Colonic mucosa (tissue), 4 donors: ENCODE measurements at regions of chr2 and their contacts with region 1.

Region 1: GRCh38 chr2:177164584-177165052 is 48.0 kb upstream of the HNRNPA3 start:
- DNase-seq: peak; percentile 92
- H3K4me3 ChIP-seq: peak overlapping the region; percentile 30
- H3K27ac ChIP-seq: peak overlapping the region; percentile 85
- H3K4me1 ChIP-seq: peaks cover 3% of the 10 kb centered on the region
- H3K27me3 ChIP-seq: no peaks in the 10 kb centered on the region
- CTCF ChIP-seq: peak; percentile 99

Region 2: GRCh38 chr2:177118636-177119035 is 46.0 kb before region 1 on chr2:
- intact Hi-C with region 1: no loop called
- DNase-seq: no peak
- H3K4me3 ChIP-seq: no peak overlapping the region
- H3K27ac ChIP-seq: no peak overlapping the region
- H3K4me1 ChIP-seq: no peaks in the 10 kb centered on the region
- H3K27me3 ChIP-seq: no peaks in the 10 kb centered on the region
- CTCF ChIP-seq: no peak

Region 3: DNA sequence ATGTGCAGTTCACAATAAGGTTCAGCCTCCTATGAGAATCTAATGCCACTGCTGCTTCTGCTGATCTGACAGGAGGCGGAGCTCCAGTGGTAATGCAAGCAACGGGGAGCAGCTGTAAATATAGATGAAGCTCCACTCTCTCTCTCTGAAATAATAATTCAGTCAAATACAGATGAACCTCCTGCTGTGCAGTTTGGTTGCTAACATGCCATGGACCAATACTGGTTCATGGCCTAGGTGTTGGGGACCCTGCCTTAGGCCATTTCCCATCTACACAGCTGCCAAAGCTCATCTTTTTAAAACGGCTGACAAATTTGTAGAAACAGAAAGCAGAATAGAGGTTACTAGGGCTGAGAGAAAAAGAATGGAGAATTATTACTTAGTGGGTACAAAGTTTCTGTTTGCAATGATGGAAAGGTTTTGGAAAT is 37.3 kb after region 1 on chr2:
- intact Hi-C with region 1: loop called (anchors 5 kb)
- DNase-seq: no peak
- H3K4me3 ChIP-seq: no peak overlapping the region
- H3K27ac ChIP-seq: no peak overlapping the region
- H3K4me1 ChIP-seq: no peaks in the 10 kb centered on the region
- H3K27me3 ChIP-seq: no peaks in the 10 kb centered on the region
- CTCF ChIP-seq: no peak

Region 4: DNA sequence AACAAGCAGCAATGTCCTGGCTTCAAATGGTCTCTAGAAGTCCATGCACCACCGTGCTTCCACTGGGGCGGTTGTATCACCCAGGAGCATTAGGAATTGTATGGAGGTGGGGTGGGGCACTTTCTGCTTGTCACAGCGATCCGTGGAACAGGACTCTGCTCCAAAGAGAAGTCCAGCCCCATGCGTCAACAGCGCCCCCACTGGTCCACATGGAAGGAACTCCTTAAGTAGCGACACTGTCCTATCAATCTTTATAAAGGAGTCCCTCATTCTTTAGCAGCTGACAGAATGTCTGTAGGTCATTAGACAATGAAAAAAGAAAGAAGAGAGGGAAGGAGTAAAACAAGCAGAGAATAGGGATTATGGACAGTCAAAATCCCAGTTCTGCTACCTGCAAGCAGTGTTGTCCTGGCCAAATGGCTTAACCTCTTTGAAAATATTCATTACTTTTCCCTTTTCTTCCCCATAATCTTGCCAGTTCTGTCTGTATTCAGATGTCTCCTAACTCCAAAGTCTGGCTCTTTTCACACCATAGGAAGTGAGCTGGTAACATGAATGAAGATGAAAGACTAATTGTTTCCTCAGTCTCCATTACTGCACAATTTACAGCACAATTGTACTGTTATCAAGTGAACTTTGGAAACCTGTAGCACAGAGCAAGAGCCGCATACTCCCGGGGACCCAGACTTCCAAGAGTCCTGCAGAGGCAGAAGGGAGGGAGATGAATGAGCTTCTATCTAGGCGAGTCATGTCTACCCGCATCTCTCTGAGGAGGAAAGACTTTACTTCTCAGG is 90.0 kb after region 1 on chr2:
- intact Hi-C with region 1: loop called (anchors 5 kb)
- DNase-seq: peak; percentile 87
- H3K4me3 ChIP-seq: no peak overlapping the region
- H3K27ac ChIP-seq: peak overlapping the region; percentile 62
- H3K4me1 ChIP-seq: peaks cover 42% of the 10 kb centered on the region
- H3K27me3 ChIP-seq: no peaks in the 10 kb centered on the region
- CTCF ChIP-seq: peak; percentile 51

Region 5: DNA sequence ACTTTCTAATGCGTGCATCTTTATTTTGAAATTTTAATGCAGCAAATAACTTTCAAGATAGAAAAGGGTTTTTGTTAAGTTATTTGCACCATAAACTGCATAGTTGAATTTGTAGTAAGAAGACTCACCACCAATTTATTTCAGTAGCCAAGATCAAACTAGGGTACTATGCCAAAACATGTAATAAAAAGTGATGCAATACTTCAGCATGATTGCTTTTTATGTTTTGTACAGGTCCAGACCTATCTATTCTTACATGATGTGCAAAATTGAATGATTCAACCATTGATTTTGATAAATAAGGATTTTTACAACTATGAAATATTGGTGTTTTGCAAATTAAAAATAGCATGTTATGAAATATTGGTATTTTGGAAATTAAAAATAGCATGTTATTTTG is 254.7 kb after region 1 on chr2:
- intact Hi-C with region 1: loop called (anchors 10 kb)
- DNase-seq: no peak
- H3K4me3 ChIP-seq: no peak overlapping the region
- H3K27ac ChIP-seq: no peak overlapping the region
- H3K4me1 ChIP-seq: no peaks in the 10 kb centered on the region
- H3K27me3 ChIP-seq: no peaks in the 10 kb centered on the region
- CTCF ChIP-seq: no peak

Region 6: GRCh38 chr2:177568390-177568789 is 403.8 kb after region 1 on chr2:
- intact Hi-C with region 1: no loop called
- DNase-seq: no peak
- H3K4me3 ChIP-seq: no peak overlapping the region
- H3K27ac ChIP-seq: no peak overlapping the region
- H3K4me1 ChIP-seq: no peaks in the 10 kb centered on the region
- H3K27me3 ChIP-seq: no peaks in the 10 kb centered on the region
- CTCF ChIP-seq: no peak

Region 7: DNA sequence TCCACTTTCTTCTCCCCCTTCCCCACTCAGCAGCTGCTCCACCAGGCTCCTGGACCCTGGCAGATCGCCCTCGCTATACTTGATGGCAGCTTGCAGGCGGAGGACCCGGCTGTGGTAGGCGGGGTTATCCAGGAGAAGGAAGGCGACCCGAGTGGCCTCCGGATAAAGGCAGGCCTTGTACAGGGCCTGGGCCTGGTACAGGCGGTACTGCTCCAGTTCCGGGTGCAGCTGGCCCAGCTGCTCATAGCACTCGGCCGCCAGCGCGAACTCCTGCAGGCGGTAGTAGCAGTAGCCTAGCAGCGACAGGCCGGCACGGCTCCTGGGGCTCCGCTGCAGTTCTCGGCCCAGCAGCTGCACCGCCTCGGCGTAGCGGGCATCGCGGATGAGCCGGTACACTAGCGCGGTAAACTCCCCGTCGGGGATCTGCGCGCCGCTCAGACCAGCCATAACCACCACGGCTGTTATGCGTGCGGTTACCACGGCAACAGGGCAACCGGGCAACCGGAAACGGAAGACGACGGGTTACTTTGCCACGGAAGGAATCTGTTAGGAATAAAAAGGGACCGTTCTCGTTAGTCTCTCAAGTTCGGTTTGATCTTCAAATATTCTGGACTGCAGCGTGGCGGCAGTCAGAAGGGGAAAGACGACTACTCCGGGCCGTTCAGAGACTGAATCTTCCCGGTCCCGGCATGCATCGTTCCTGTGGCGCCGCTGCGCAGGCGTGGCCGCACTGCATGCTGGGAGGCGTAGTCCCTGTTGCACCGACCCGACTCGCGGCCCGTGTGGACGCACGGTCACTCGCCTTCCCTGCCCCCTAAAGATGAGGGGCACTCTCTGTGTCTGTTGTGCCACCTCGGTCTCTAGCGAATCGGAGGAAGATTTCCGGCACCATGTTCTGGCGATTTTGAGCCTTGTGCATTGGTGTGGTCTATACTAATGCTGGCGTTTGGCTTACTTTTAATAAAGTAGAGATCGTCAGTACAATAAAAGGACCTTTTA is 453.9 kb after region 1 on chr2:
- intact Hi-C with region 1: loop called (anchors 10 kb)
- DNase-seq: peak; percentile 95
- H3K4me3 ChIP-seq: peak overlapping the region; percentile 67
- H3K27ac ChIP-seq: peak overlapping the region; percentile 85
- H3K4me1 ChIP-seq: no peaks in the 10 kb centered on the region
- H3K27me3 ChIP-seq: no peaks in the 10 kb centered on the region
- CTCF ChIP-seq: no peak